MCF 10A (cell line): ENCODE measurements at regions of chr6 and their contacts with region 1.

Region 1: GRCh38 chr6:129730477-129731165 is 20.6 kb upstream of the ARHGAP18 start:
- DNase-seq: peak; percentile 61
- H3K4me3 Mint-ChIP-seq: no peak overlapping the region
- H3K27ac Mint-ChIP-seq: no peak overlapping the region
- H3K4me1 Mint-ChIP-seq: peaks cover 22% of the 10 kb centered on the region
- H3K27me3 Mint-ChIP-seq: no peaks in the 10 kb centered on the region
- CTCF ChIP-seq: peak; percentile 56

Region 2: DNA sequence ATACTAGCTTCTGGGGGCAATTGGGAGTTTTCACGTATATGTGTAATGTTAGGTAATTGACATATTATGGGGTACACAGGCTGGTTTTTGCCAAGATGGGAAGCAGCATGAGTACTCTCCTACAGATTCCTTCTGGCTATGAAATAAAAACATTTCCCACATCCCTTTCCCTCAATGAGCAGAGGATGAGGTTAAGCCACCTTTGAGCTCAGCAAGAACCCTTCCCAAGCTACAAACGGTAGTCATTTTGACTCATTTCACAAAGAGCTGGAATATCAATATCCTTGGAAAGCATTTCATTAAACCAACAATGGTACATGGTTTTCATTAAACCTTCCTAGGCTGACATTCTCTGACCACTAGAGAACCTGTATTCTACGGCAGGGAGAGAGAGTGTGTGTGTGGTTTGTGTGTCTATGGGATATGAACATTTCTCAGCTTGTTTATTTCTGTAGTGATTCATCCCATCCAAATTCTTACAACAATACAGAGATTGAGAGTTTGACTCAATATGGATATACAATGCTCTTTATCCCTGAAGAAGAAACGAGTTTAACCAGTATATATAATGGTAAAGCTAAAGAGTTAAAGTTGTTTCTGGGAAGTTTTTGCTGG is 140.1 kb before region 1 on chr6:
- CTCF ChIA-PET with region 1: interaction called, 24 read pairs
- POLR2A ChIA-PET with region 1: interaction called, 3 read pairs
- intact Hi-C with region 1: no loop called
- DNase-seq: peak; percentile 55
- H3K4me3 Mint-ChIP-seq: no peak overlapping the region
- H3K27ac Mint-ChIP-seq: no peak overlapping the region
- H3K4me1 Mint-ChIP-seq: no peaks in the 10 kb centered on the region
- H3K27me3 Mint-ChIP-seq: no peaks in the 10 kb centered on the region
- CTCF ChIP-seq: no peak

Region 3: DNA sequence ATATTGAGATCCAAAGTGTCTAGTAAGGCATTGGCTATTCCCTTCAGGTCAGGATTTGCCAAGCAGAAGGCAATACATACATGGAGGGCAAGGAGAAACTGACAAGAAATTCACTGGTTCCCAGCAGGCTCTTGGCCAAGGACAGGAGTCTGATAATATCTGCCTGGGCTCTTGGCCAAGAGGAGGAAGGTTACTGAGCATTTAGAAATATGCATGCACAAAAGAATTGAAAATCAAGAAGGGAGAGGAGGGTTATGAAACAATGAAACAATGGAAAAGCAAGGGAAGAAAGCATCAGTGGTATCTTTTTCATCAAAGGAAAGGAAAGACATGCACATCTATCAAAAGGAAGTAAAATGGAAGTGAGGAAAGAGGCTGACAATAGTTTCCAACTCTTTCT is 63.0 kb before region 1 on chr6:
- CTCF ChIA-PET with region 1: interaction called, 5 read pairs
- POLR2A ChIA-PET with region 1: no interaction called
- intact Hi-C with region 1: loop called (anchors 5 kb)
- DNase-seq: peak; percentile 84
- H3K4me3 Mint-ChIP-seq: no peak overlapping the region
- H3K27ac Mint-ChIP-seq: no peak overlapping the region
- H3K4me1 Mint-ChIP-seq: peaks cover 35% of the 10 kb centered on the region
- H3K27me3 Mint-ChIP-seq: no peaks in the 10 kb centered on the region
- CTCF ChIP-seq: no peak

Region 4: DNA sequence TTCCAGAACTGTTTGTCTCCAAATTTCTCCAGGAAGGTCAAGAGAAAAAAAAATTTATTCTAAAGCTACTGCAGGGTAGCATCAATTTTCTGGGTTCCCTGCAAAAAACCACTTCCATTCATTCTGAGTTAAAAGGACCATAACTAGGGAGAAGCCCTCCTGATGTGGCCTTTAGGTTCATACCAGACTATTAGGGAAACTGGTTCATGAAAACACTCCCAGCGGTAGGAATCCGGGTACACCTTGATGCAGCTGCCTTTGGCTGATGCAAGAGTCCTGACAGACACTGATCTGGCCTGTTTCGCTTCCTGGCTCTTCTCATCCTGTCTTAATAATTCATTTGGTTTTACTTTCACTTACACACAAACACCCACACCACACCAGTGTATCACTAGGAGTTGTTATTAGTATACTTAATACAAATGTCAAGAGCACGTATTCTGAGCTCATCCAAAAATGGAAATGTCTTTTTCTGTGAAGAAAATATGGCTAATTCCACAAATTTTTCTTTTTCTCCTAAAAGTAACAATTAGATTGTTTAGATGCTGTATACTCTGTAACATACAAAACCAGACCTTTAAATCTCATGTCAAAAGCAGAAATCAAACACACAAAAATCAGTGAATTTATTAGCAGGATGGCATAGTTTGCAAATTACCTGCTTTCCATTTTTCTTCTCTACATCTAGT is 17.7 kb after region 1 on chr6:
- CTCF ChIA-PET with region 1: interaction called, 27 read pairs
- POLR2A ChIA-PET with region 1: interaction called, 7 read pairs
- intact Hi-C with region 1: loop called (anchors 1 kb)
- DNase-seq: peak; percentile 93
- H3K4me3 Mint-ChIP-seq: peak overlapping the region; percentile 47
- H3K27ac Mint-ChIP-seq: peak overlapping the region; percentile 87
- H3K4me1 Mint-ChIP-seq: peaks cover 36% of the 10 kb centered on the region
- H3K27me3 Mint-ChIP-seq: no peaks in the 10 kb centered on the region
- CTCF ChIP-seq: peak; percentile 28

Region 5: DNA sequence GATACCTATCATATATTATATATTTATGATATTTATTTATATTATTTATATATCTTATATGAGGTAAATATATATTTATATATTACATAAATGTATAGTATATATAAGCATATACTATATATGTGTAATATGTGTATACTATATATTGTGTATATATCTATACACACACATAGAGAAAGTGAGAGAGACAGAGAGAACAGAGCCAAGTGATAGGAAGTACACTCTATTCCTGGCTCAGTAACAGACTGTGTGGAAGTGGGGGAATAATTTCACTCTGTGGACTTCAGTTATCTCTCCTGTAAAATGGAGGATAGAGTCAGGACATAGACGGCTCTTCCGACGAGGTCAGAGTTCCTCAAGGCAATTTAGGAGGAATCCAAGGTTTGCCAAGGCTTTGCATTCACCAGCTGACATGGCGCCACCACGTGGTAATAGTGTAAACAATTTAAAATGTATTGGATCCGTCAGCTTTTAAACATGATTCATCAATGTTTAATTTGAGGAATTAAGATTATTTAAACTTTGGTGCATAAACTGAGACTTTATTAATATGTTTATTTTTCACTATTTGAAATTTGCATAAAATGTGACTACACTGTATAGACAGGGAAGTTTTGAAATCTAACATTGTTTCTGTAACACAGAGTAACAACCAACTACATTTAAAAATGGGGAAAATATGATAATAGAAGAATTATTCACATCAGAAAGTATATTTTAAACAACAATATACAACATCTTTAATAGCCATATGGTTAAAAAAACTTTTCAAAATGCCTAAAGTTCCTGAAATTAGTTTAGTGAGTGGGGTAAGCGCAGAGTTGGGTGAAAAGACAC is 205.9 kb after region 1 on chr6:
- CTCF ChIA-PET with region 1: interaction called, 3 read pairs
- POLR2A ChIA-PET with region 1: no interaction called
- intact Hi-C with region 1: loop called (anchors 2 kb)
- DNase-seq: peak; percentile 90
- H3K4me3 Mint-ChIP-seq: peak overlapping the region; percentile 41
- H3K27ac Mint-ChIP-seq: no peak overlapping the region
- H3K4me1 Mint-ChIP-seq: no peaks in the 10 kb centered on the region
- H3K27me3 Mint-ChIP-seq: no peaks in the 10 kb centered on the region
- CTCF ChIP-seq: peak; percentile 53